Sigmoid colon (tissue), 7 donors: ENCODE measurements at regions of chr22 and their contacts with region 1.

Region 1: DNA sequence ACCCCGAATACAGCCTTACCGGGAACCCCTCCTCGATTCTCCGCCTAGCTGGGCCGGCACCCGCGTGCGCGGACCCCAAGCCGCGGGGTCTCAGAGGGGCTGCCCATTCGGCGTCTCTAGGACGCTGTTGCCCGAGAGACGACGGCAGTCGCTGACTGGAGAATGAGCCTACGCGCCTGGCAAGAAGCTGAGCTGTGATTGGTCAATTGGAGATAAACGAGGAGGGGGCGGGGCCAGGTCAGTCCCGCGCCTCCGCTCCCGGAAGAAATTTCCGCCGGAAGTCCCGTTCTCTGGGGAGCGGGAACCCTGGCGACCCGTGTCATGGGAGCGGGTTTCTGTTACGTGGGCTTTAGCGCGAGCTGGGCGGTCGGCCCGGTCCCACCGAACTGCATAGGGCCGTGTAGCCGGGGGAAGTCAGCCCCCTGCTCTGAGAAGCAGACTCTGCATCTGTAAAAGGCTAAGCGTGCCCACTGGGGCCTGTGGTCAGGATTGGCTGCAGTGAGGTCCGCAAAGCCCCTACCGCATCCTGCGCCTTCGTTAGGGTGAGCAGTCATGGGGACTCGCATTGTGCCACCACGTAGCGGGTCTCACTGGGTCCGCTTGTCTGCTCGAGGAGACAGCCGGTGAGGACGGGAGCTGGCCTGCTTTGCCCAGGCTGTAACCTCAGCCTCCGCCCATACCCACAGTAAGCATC is at the start of gene EFCAB6:
- DNase-seq: peak; percentile 96
- H3K4me3 ChIP-seq: peak within 1 kb of the TSS; percentile 72 to 98 (median 88)
- H3K27ac ChIP-seq: peak within 1 kb of the TSS; percentile 74 to 87 (median 82)
- H3K4me1 ChIP-seq: peaks cover 0 to 18% (median 15%) of the 10 kb centered on the region in 4 donors
- H3K27me3 ChIP-seq: no peaks in the 10 kb centered on the region
- CTCF ChIP-seq: no peak
- EP300 ChIP-seq: no peak
- POLR2A ChIP-seq: peak; percentile 44 to 65
- total RNA-seq, gene EFCAB6: 1.8 to 5.7 (median 3.5) TPM

Region 2: DNA sequence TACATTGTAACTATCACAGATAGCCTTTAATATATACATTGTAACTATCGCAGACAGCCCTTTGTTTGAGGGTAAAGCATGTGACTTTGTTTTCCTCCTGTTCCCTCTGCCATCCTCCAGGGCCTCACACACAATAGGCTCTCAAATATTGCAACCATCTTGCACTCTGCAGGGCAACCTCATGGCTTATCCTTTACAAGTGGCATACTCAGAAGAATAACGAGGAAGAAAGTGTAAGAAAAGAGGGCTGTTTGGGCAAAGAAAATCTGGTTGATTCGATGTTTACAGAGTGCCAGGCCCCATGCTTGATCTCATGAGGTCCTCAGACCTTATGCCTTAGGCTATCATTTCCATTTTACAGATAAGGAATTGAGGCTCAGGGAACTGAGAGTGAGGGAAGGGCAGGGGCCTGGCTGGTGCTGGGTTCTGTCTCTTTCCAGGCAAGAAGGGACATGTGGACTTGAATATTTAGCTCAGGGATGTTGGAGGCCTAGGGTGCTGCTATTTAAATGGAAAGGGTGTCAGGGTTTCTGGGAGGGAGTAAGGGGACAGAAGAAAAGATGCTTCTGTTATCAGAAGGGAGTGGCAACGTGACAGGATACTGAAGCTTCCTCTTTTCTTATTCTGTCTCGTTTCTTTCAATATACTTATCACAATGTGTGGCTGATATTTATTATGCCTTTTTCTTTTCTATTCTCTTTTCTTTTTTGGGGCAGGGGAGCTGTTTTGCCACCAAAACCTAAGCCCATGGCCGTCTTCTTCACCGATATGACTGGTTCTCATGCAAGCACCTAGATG is 141.9 kb after region 1 on chr22:
- intact Hi-C with region 1: loop called (anchors 5 kb)
- DNase-seq: no peak
- H3K4me3 ChIP-seq: peak overlapping the region in 3 of 4 donors; percentile 87 to 96 (median 89)
- H3K27ac ChIP-seq: peak overlapping the region in 3 of 4 donors; percentile 86 to 91 (median 89)
- H3K4me1 ChIP-seq: peaks cover 0 to 30% (median 27%) of the 10 kb centered on the region in 4 donors
- H3K27me3 ChIP-seq: peaks cover 0 to 7% (median 0%) of the 10 kb centered on the region in 3 donors
- CTCF ChIP-seq: no peak
- EP300 ChIP-seq: no peak
- POLR2A ChIP-seq: no peak